ENCODE measurements at regions of chr4 and their contacts with region 1.

Region 1: GRCh38 chr4:76949276-76950051 is at the start of gene SEPTIN11:
- DNase-seq: peak; percentile 93
- H3K4me3 Mint-ChIP-seq: peak within 1 kb of the TSS; percentile 81
- H3K27ac Mint-ChIP-seq: peak within 1 kb of the TSS; percentile 76
- H3K4me1 Mint-ChIP-seq: peaks cover 28% of the 10 kb centered on the region
- H3K27me3 Mint-ChIP-seq: no peaks in the 10 kb centered on the region
- CTCF ChIP-seq: no peak
- total RNA-seq, gene SEPTIN11: 57.1 and 82.7 TPM in 2 replicates

Region 2: DNA sequence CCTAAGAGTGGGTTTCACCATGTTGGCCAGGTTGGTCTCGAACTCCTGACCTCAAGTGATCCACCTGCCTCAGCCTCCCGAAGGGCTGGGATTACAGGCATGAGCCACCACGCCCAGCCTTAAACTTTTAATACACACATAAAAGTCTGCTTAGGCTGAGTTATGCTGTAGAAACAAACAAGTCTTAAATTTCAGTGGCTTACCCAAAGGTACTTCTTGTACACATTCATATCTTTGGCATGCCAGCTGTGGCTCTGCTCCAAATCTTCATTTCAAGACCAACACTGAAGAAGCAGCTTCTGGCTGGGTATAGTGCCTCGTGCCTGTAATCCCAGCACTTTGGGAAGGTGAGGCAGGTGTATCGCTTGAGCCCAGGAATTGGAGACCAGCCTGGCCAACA is 1127.5 kb before region 1 on chr4:
- CTCF ChIA-PET with region 1: no interaction called
- POLR2A ChIA-PET with region 1: no interaction called
- intact Hi-C with region 1: no loop called
- DNase-seq: peak; percentile 14
- H3K4me3 Mint-ChIP-seq: no peak overlapping the region
- H3K27ac Mint-ChIP-seq: no peak overlapping the region
- H3K4me1 Mint-ChIP-seq: no peaks in the 10 kb centered on the region
- H3K27me3 Mint-ChIP-seq: no peaks in the 10 kb centered on the region
- CTCF ChIP-seq: no peak

Region 3: GRCh38 chr4:76758290-76758882 is 191.1 kb before region 1 on chr4:
- CTCF ChIA-PET with region 1: interaction called, 4 read pairs
- POLR2A ChIA-PET with region 1: interaction called, 3 read pairs
- intact Hi-C with region 1: loop called (anchors 10 kb)
- DNase-seq: peak; percentile 80
- H3K4me3 Mint-ChIP-seq: no peak overlapping the region
- H3K27ac Mint-ChIP-seq: no peak overlapping the region
- H3K4me1 Mint-ChIP-seq: peaks cover 8% of the 10 kb centered on the region
- H3K27me3 Mint-ChIP-seq: no peaks in the 10 kb centered on the region
- CTCF ChIP-seq: peak; percentile 52

Region 4: DNA sequence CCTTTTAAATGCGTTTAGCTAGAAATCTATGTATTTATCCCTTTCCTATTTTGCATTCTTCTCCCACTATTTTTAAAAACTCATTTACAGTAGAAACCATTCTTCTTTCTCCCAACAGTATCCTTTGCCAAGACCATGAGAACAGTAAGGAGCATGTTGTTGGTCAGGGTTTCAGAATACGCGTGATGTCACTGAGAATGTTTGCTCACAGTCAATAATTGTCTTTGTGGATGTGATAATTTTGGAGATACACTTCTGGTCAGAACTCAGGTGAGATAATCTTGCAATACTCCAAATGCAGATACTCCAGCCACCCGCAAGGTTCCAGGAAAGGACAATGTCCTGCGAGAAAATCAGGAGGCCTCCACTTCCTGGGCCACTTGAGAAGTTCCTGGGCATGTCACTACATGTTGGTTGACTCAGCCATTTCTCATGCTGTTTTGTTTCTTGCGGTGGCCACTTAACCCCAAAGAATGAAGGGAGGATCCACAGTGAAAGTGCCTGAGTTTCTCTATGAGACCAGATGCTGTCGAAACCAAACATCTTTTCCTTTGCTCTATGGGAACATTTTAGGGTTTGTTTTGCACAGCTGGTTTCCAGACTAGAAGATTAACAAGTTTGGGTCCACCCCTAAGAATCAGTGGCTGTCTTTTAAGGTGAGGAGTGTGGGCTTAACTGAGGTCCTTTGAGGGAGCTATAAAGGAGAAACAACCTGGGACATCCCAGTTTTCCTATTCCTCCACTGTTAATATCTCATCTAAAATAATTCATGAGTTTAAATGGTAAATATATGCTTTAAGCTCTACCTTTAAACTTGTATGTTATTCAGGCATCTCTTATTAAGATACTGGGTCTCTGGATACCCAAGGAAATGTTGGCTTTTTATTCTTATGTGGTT is 167.5 kb before region 1 on chr4:
- CTCF ChIA-PET with region 1: no interaction called
- POLR2A ChIA-PET with region 1: interaction called, 36 read pairs
- intact Hi-C with region 1: loop called (anchors 1 kb)
- DNase-seq: peak; percentile 98
- H3K4me3 Mint-ChIP-seq: peak overlapping the region; percentile 62
- H3K27ac Mint-ChIP-seq: peak overlapping the region; percentile 99
- H3K4me1 Mint-ChIP-seq: peaks cover 28% of the 10 kb centered on the region
- H3K27me3 Mint-ChIP-seq: no peaks in the 10 kb centered on the region
- CTCF ChIP-seq: no peak

Region 5: GRCh38 chr4:76984127-76984526 is 34.7 kb after region 1 on chr4:
- CTCF ChIA-PET with region 1: interaction called, 3 read pairs
- POLR2A ChIA-PET with region 1: interaction called, 9 read pairs
- intact Hi-C with region 1: loop called (anchors 2 kb)
- DNase-seq: peak; percentile 26
- H3K4me3 Mint-ChIP-seq: no peak overlapping the region
- H3K27ac Mint-ChIP-seq: peak overlapping the region; percentile 87
- H3K4me1 Mint-ChIP-seq: peaks cover 46% of the 10 kb centered on the region
- H3K27me3 Mint-ChIP-seq: no peaks in the 10 kb centered on the region
- CTCF ChIP-seq: peak; percentile 38

Region 6: DNA sequence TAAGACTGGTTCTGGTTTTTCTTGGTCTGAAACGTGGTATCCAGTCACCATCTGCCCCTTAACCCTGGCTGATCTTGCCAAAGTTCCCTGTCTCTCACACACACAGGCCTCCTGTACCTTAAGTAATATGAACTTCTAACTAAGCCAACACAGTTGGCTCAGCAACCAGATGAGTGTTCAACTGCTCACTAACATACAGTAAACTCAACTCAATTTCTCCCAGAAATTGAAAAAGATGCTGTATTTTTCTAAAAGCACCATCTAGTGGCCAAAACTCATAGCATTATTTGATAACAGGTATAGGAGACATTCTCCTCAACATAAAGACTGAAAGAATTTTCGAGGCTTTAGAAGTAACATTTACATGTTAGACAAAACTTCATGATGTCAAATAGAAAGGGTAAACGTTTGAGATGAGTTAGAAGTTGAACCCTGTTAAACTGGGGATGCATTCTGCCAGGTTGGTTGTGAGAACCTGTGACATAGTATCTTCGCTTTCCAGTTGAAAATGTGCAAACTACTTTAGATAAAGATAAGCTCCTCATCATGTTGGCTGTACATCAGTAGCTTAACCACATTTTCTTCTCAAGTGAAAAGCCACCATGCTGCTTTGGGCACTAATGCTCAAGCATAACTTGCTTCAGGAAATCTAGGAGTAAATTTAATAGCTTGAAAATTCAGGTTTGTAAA is 95.1 kb after region 1 on chr4:
- CTCF ChIA-PET with region 1: interaction called, 6 read pairs
- POLR2A ChIA-PET with region 1: interaction called, 11 read pairs
- intact Hi-C with region 1: loop called (anchors 2 kb)
- DNase-seq: peak; percentile 47
- H3K4me3 Mint-ChIP-seq: peak overlapping the region; percentile 30
- H3K27ac Mint-ChIP-seq: peak overlapping the region; percentile 82
- H3K4me1 Mint-ChIP-seq: peaks cover 20% of the 10 kb centered on the region
- H3K27me3 Mint-ChIP-seq: no peaks in the 10 kb centered on the region
- CTCF ChIP-seq: peak; percentile 44

Measured in MCF 10A (cell line).